Prostate gland (tissue), 2 donors: ENCODE measurements at regions of chr4 and their contacts with region 1.

Region 1: DNA sequence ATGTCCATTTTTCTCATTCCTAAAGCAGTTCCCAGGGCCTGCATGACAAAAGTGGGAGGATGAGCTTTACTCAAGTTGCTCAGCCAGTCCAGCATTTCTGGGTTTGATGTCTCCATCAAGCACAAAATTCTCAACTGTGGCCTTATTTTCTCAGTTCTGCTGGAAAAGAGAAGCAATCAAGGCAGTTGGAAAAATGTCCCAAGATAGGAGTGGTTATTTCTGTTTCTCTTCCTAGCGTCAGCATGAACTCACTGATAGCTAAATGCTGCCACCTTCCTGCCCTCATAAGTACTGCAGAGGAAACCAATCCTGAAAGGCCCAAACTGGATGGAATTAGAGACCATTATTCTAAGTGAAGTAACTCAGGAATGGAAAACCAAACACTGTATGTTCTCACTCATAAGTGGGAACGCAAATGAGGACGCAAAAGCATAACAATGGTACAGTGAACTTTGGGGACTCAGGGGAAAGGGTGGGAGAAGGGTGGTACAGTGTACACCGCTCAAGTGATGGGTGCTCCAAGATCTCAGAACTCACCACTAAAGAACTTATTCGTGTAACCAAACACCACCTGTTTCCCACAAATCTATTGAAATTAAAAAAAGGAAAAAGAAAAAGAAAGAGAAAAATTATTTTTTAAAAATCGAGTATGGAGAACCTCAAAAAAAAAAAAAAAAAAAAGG is 29.6 kb downstream of the ADH7 start:
- DNase-seq: peak; percentile 69
- H3K4me3 ChIP-seq: no peak overlapping the region
- H3K27ac ChIP-seq: peak overlapping the region in 1 of 2 donors; percentile 16
- H3K4me1 ChIP-seq: no peaks in the 10 kb centered on the region
- H3K27me3 ChIP-seq: no peaks in the 10 kb centered on the region
- CTCF ChIP-seq: peak; percentile 86 to 96 (median 92)
- POLR2A ChIP-seq: no peak

Region 2: DNA sequence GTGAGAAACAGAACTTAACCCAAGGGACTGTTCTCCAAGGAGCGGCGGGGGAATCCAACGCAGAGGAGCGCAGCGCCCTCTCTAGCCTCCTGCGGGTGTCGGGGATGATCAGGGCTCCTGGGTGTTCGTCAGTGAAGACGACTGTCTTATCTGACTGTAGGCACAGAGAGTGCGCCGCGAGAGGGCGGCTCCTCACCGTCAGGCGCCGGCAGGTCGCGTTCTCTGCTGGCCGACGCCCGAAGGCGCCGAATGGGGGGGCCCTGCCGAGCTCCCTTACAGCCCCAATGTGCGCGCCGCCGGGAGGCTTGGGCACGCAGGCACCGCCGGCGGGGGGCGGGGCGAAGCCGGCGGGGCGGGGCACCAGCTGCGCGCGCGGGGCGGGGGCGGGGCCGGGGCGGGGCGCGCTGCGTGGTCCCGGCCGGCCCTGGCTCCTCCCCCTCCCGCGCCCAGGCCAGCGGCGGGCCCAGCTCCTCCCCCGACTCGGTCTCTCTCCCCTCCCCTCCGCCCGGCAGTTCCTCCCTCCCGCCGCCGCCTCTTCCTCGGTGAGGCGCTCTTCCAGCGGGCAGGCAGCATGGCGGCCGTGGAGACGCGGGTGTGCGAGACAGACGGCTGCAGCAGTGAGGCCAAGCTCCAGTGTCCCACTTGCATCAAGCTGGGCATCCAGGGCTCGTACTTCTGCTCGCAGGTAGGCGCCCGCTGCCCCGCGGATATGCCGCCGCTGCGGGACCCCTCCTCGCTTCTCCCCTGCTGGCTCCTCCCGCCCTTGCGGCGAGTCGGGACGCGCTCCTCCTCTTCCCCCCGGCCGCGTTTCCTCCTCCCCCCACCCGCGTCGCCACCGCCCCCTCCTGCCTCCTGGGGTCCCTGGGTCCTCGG is 410.2 kb before region 1 on chr4 and contains the start of gene METAP1:
- intact Hi-C with region 1: loop called (anchors 5 kb)
- DNase-seq: peak; percentile 98
- H3K4me3 ChIP-seq: peak within 1 kb of the TSS; percentile 90 to 94
- H3K27ac ChIP-seq: peak within 1 kb of the TSS; percentile 91 to 93
- H3K4me1 ChIP-seq: no peaks in the 10 kb centered on the region
- H3K27me3 ChIP-seq: no peaks in the 10 kb centered on the region
- CTCF ChIP-seq: peak; percentile 36 to 96 (median 90)
- POLR2A ChIP-seq: peak; percentile 82
- total RNA-seq, gene METAP1: 55.3 to 70.1 TPM

Region 3: GRCh38 chr4:99117876-99118693 is 287.5 kb before region 1 on chr4:
- intact Hi-C with region 1: loop called (anchors 2 kb)
- DNase-seq: no peak
- H3K4me3 ChIP-seq: no peak overlapping the region
- H3K27ac ChIP-seq: no peak overlapping the region
- H3K4me1 ChIP-seq: no peaks in the 10 kb centered on the region
- H3K27me3 ChIP-seq: no peaks in the 10 kb centered on the region
- CTCF ChIP-seq: peak in 2 of 4 experiments; percentile 6 to 34
- POLR2A ChIP-seq: no peak

Region 4: DNA sequence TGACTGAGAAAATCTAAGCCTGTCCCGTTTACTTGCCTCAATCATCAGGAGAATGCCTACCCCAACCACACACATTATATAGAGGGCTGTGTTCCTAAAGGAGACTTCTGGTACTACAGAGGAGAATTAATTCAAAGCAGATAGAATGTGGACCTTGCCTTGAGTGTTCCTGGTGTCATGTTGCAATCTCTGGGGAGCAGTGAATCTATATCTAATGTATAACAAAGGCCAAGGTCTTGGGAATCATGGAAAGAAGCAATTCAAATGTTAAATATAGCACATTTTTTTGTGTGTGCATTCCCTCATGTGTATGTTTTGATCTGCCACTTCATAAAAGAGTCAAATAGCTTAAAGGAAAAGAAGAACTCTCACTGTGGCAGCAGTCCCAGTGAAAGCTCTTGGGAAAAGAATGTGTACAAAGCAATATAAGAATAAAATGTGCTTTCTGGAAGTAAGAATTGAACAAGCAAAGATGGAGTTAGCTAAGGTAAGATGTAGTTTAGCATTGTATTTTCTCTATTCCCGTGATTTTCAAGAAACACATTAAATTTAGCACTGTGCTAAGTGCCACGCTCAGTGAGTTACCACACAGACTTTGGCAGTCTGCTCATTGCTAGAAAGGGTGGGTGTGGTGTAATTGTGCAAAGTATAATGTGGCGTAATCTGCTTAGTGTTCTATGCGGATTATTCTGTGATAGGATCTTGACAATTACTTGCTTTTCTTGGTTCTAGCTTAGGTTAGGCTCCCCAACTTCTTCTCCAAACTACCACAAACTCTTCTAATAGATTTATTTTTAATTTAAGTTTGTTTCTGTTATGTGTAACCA is 200.2 kb before region 1 on chr4:
- intact Hi-C with region 1: loop called (anchors 2 kb)
- DNase-seq: no peak
- H3K4me3 ChIP-seq: no peak overlapping the region
- H3K27ac ChIP-seq: no peak overlapping the region
- H3K4me1 ChIP-seq: no peaks in the 10 kb centered on the region
- H3K27me3 ChIP-seq: no peaks in the 10 kb centered on the region
- CTCF ChIP-seq: no peak
- POLR2A ChIP-seq: no peak

Region 5: DNA sequence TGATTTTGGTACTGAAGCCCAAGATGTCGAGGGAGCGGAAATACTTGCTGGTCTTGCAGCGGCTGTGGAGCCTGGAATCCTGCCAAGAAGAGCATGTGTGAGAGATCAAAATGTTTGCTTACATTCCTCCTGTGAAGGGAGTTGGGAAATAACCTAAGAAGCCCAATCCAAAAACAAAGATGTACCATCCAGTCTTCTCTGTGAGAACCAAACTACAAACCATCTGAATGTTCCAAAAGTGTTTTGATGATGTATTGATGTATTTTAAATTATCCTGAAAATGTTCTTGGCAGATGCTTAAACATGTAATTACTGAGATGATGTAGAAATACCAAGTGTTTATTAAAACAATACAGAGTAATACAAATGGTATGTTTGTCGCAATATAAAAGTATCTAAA is 104.6 kb before region 1 on chr4:
- intact Hi-C with region 1: loop called (anchors 5 kb)
- DNase-seq: peak; percentile 91
- H3K4me3 ChIP-seq: no peak overlapping the region
- H3K27ac ChIP-seq: peak overlapping the region in 1 of 2 donors; percentile 26
- H3K4me1 ChIP-seq: no peaks in the 10 kb centered on the region
- H3K27me3 ChIP-seq: no peaks in the 10 kb centered on the region
- CTCF ChIP-seq: no peak
- POLR2A ChIP-seq: no peak

Region 6: DNA sequence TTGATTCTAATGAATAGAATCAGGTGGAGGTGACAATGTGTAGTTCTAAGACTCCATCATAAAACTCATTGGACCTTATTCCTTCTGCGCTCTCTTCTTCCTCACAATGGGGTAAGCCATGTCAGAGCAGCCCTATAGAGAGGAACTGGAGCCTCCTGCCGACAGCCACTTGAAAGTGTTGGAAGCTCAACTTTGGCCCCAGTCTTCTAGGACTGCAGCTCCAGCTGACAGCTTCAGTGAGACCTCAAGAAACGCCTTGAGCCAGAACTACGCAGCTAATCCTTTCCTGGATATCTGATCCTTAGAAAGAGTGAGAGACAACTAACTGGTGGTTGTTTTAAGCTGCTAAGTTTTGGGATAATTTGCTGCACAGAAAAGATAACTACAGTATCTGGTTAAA is 51.7 kb after region 1 on chr4:
- intact Hi-C with region 1: loop called (anchors 5 kb)
- DNase-seq: no peak
- H3K4me3 ChIP-seq: no peak overlapping the region
- H3K27ac ChIP-seq: no peak overlapping the region
- H3K4me1 ChIP-seq: no peaks in the 10 kb centered on the region
- H3K27me3 ChIP-seq: no peaks in the 10 kb centered on the region
- CTCF ChIP-seq: no peak
- POLR2A ChIP-seq: no peak